ENCODE measurements at regions of chr3 and their contacts with region 1.

Region 1: GRCh38 chr3:98657457-98657856 is 64.0 kb upstream of the CPOX start:
- DNase-seq: peak; percentile 69
- ATAC-seq: peak; percentile 97
- H3K4me3 ChIP-seq: peak overlapping the region; percentile 55
- H3K27ac ChIP-seq: no peak overlapping the region
- H3K4me1 ChIP-seq: peaks cover 4% of the 10 kb centered on the region; the same call in 1 of the 2 replicates
- H3K27me3 ChIP-seq: no peaks in the 10 kb centered on the region
- CTCF ChIP-seq: peak; percentile 75

Region 2: DNA sequence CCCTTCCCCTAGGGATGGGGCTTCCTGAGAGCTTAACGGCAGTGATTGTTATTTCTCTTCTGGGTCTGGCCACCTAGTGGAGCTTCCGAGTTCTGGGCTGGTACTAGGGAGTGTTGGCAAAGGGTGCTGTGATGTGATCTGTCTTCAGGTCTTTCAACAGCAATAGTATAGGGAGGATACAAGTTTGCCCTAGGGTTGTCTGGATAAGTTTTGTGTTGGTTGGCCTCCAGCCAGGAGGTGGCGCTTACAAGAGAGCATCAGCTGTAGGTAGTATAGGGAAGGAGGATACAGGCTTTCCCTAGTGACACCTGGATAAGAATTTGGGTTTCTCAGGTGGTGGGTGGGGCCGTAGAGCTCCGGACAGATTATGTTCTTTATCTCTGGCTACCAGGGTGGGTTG is 44.9 kb before region 1 on chr3:
- CTCF ChIA-PET with region 1: no interaction called
- POLR2A ChIA-PET with region 1: no interaction called
- intact Hi-C with region 1: no loop called
- DNase-seq: peak; percentile 44
- ATAC-seq: peak; percentile 64; the same call in 1 of the 2 replicates
- H3K4me3 ChIP-seq: no peak overlapping the region
- H3K27ac ChIP-seq: no peak overlapping the region
- H3K4me1 ChIP-seq: no peaks in the 10 kb centered on the region
- H3K27me3 ChIP-seq: no peaks in the 10 kb centered on the region
- CTCF ChIP-seq: peak; percentile 50; the same call in 1 of the 2 replicates

Region 3: DNA sequence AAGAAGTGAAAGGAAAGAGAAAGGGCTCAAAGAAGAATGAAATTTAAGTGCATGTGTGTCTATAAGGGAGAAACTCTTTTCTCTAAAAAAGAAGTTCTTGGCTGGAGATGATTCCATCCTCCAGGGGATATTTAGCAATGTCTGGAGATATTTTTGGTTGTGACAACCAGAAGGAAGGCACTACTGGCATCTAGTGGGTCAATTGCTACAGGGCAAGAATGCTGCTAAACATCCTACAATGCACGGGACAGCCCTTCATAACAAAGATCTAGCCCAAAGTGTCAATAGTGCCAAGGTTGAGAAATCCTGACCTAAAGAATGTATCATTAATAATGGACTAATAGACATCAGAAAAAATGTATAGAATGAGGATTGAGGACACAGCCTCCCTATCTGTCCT is 48.2 kb after region 1 on chr3:
- CTCF ChIA-PET with region 1: no interaction called
- POLR2A ChIA-PET with region 1: no interaction called
- intact Hi-C with region 1: loop called (anchors 5 kb)
- DNase-seq: peak; percentile 54
- ATAC-seq: peak; percentile 75
- H3K4me3 ChIP-seq: no peak overlapping the region
- H3K27ac ChIP-seq: no peak overlapping the region
- H3K4me1 ChIP-seq: 0 out of 2 replicates have a peak, but pooled peaks cover 5% of the 10 kb centered on the region
- H3K27me3 ChIP-seq: no peaks in the 10 kb centered on the region
- CTCF ChIP-seq: peak; percentile 66

Region 4: GRCh38 chr3:99753268-99753975 is 1096.0 kb after region 1 on chr3:
- CTCF ChIA-PET with region 1: no interaction called
- POLR2A ChIA-PET with region 1: no interaction called
- intact Hi-C with region 1: no loop called
- DNase-seq: peak; percentile 82
- ATAC-seq: peak; percentile 81
- H3K4me3 ChIP-seq: no peak overlapping the region
- H3K27ac ChIP-seq: no peak overlapping the region
- H3K4me1 ChIP-seq: peaks cover 25% of the 10 kb centered on the region
- H3K27me3 ChIP-seq: no peaks in the 10 kb centered on the region
- CTCF ChIP-seq: peak; percentile 95

Measured in PC-3 (cell line).